B cell (primary cell): ENCODE measurements at regions of chr6 and their contacts with region 1.

Region 1: GRCh38 chr6:156045401-156046267 is 590.0 kb upstream of the NOX3 start:
- DNase-seq: no peak
- ATAC-seq: no peak
- H3K4me3 ChIP-seq: no peak overlapping the region
- H3K4me3 Mint-ChIP-seq: no peak overlapping the region
- H3K27ac ChIP-seq: no peak overlapping the region
- H3K27ac Mint-ChIP-seq: no peak overlapping the region
- H3K4me1 ChIP-seq: no peaks in the 10 kb centered on the region
- H3K4me1 Mint-ChIP-seq: no peaks in the 10 kb centered on the region
- H3K27me3 ChIP-seq: no peaks in the 10 kb centered on the region
- H3K27me3 Mint-ChIP-seq: no peaks in the 10 kb centered on the region
- CTCF ChIP-seq: no peak

Region 2: DNA sequence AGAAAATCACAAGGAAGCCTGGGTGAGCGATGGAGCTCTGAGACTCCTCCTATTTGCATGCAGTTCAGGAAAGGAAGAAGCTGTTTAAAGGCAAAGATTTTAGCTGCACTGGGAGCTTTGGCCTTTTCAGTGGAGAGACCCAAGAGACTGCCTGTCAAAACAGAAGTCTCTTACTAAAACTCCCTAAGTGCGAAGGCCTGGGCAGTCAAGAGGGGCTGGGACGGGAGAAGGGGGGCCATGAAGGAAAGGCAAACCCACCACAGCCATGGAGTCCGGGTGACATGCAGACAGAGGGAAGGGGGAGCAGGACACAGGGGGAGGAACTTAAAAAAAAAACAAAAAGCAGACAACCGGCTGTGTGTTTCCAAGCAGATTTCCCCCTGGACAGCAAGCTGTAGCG is 52.4 kb before region 1 on chr6:
- CTCF ChIA-PET with region 1: no interaction called
- POLR2A ChIA-PET with region 1: no interaction called
- intact Hi-C with region 1: no loop called
- DNase-seq: no peak
- ATAC-seq: no peak
- H3K4me3 ChIP-seq: no peak overlapping the region
- H3K4me3 Mint-ChIP-seq: no peak overlapping the region
- H3K27ac ChIP-seq: no peak overlapping the region
- H3K27ac Mint-ChIP-seq: no peak overlapping the region
- H3K4me1 ChIP-seq: no peaks in the 10 kb centered on the region
- H3K4me1 Mint-ChIP-seq: no peaks in the 10 kb centered on the region
- H3K27me3 ChIP-seq: no peaks in the 10 kb centered on the region
- H3K27me3 Mint-ChIP-seq: no peaks in the 10 kb centered on the region
- CTCF ChIP-seq: no peak

Region 3: DNA sequence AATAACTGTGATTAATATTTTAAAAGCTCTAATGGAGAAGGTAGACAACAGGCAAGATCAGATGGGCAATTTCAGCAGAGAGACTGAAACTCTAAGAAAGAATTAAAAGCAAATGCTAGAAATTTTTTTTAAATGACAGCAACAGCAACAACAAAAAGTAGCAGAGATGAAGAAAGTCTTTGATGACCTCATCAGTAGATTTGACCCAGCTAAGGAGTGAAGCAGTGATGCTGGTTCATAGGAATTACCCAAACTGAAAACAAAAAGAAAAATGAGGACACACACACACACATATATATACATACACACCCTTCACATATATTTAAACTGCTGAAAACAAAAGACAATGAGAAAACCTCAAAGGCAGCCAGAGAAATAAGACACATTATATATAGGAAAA is 533.9 kb after region 1 on chr6:
- CTCF ChIA-PET with region 1: no interaction called
- POLR2A ChIA-PET with region 1: no interaction called
- intact Hi-C with region 1: no loop called
- DNase-seq: no peak
- ATAC-seq: no peak
- H3K4me3 ChIP-seq: no peak overlapping the region
- H3K4me3 Mint-ChIP-seq: no peak overlapping the region
- H3K27ac ChIP-seq: no peak overlapping the region
- H3K27ac Mint-ChIP-seq: no peak overlapping the region
- H3K4me1 ChIP-seq: no peaks in the 10 kb centered on the region
- H3K4me1 Mint-ChIP-seq: no peaks in the 10 kb centered on the region
- H3K27me3 ChIP-seq: no peaks in the 10 kb centered on the region
- H3K27me3 Mint-ChIP-seq: no peaks in the 10 kb centered on the region
- CTCF ChIP-seq: no peak

Region 4: GRCh38 chr6:157927011-157927410 is 1881.4 kb after region 1 on chr6:
- CTCF ChIA-PET with region 1: no interaction called
- POLR2A ChIA-PET with region 1: interaction called, 12 read pairs
- intact Hi-C with region 1: no loop called
- DNase-seq: no peak
- ATAC-seq: no peak
- H3K4me3 ChIP-seq: no peak overlapping the region
- H3K4me3 Mint-ChIP-seq: no peak overlapping the region
- H3K27ac ChIP-seq: no peak overlapping the region
- H3K27ac Mint-ChIP-seq: no peak overlapping the region
- H3K4me1 ChIP-seq: no peaks in the 10 kb centered on the region
- H3K4me1 Mint-ChIP-seq: no peaks in the 10 kb centered on the region
- H3K27me3 ChIP-seq: no peaks in the 10 kb centered on the region
- H3K27me3 Mint-ChIP-seq: no peaks in the 10 kb centered on the region
- CTCF ChIP-seq: no peak